Thyroid gland (tissue), 4 donors: ENCODE measurements at regions of chr5 and their contacts with region 1.

Region 1: DNA sequence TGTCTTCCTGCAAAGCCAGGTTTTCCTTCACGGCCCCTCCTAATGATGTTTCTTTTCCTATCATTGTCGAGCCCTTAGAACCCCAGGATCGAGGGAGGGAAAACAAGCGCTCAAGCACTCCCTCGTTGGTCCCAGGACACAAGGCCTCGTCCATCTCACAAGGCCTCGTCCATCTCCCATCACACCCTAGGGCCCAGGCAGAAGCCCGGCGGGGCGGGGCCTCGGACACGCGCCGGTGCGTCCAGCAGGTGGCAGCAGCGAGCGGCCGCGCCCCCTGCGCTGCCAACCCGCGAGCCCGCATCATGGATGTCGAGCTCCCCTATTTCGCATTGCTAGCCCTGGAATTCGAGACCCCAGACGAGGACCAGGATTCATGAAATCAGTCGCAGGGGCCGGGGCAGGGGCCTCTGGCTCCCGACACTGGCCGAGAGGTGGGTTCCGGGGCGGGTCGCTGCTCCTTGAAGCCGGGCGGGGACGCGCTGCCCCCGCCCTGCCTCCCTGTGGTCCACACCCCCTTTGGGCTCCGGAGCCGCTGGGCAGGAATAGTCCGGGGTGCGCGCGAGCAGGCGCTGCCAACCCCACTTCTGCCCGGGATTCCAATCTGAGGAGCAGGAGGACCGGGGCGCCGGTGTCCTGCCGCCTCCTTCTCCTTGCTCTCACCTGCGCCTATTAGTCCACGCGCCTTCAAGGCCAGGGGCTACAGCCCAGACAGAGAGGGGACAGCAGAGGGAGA is at the start of gene ABLIM3:
- DNase-seq: peak; percentile 30 to 40
- H3K4me3 ChIP-seq: peak within 1 kb of the TSS in 2 of 3 donors; percentile 47 to 57
- H3K27ac ChIP-seq: peak within 1 kb of the TSS; percentile 70 to 81 (median 73)
- H3K4me1 ChIP-seq: peaks cover 0 to 11% of the 10 kb centered on the region in 2 donors
- H3K27me3 ChIP-seq: no peaks in the 10 kb centered on the region
- CTCF ChIP-seq: peak; percentile 30 to 87 (median 50)
- POLR2A ChIP-seq: no peak
- total RNA-seq, gene ABLIM3: 10.5 to 30.4 (median 22.3) TPM

Region 2: DNA sequence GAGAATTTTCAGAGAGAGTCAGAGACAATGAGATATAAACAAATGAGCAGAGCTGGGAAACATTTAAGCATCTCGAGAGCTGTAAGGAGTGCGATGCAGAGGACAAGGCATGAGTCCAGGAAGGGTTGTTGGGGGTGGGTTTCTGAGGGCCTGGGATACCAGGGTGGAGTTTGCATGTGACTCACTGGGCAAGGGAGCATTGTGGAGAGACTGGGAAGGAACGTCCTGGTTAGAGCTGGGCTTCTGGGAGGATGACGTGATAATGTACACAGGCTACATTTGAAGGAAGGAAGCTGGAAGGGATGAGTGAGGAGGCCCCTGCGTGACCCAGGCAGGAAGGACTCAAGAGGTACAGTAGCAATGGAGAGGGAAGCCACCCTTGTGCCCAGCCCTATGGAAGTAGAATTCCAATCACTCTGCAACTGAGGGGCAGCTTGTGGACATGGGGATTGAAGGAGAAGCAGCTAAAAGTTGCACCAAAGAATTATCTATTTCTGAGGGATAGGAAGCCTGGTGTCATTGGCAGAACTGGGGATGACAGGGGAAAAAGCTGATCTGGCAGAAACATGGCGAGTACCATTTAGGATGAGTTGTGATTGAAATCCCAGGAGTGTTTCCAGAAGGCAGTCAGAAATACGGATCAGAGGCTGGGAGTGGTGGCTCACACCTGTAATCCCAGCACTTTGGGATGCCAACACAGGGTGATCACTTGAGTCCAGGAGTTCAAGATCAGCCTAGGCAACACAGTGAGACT is 71.0 kb after region 1 on chr5:
- intact Hi-C with region 1: no loop called
- DNase-seq: no peak
- H3K4me3 ChIP-seq: no peak overlapping the region
- H3K27ac ChIP-seq: no peak overlapping the region
- H3K4me1 ChIP-seq: peaks cover 0 to 2% of the 10 kb centered on the region in 2 donors
- H3K27me3 ChIP-seq: no peaks in the 10 kb centered on the region
- CTCF ChIP-seq: no peak
- POLR2A ChIP-seq: no peak

Region 3: GRCh38 chr5:149228618-149229297 is 87.4 kb after region 1 on chr5:
- intact Hi-C with region 1: loop called (anchors 10 kb)
- DNase-seq: peak in 1 of 2 donors; percentile 22
- H3K4me3 ChIP-seq: no peak overlapping the region
- H3K27ac ChIP-seq: peak overlapping the region in 1 of 3 donors; percentile 9
- H3K4me1 ChIP-seq: peaks cover 0 to 4% of the 10 kb centered on the region in 2 donors
- H3K27me3 ChIP-seq: no peaks in the 10 kb centered on the region
- CTCF ChIP-seq: peak in 4 of 6 experiments; percentile 34 to 53 (median 44)
- POLR2A ChIP-seq: no peak